ENCODE measurements at regions of chr7 and their contacts with region 1.

Region 1: GRCh38 chr7:157273208-157274093 is 63.4 kb upstream of the DNAJB6 start:
- DNase-seq: peak; percentile 63
- H3K4me3 Mint-ChIP-seq: no peak overlapping the region
- H3K27ac Mint-ChIP-seq: no peak overlapping the region
- H3K4me1 Mint-ChIP-seq: peaks cover 19% of the 10 kb centered on the region
- H3K27me3 Mint-ChIP-seq: peaks cover 20% of the 10 kb centered on the region

Region 2: GRCh38 chr7:157250605-157251228 is 22.7 kb before region 1 on chr7:
- CTCF ChIA-PET with region 1: interaction called, 12 read pairs
- DNase-seq: peak; percentile 61
- H3K4me3 Mint-ChIP-seq: no peak overlapping the region
- H3K27ac Mint-ChIP-seq: no peak overlapping the region
- H3K4me1 Mint-ChIP-seq: no peaks in the 10 kb centered on the region
- H3K27me3 Mint-ChIP-seq: no peaks in the 10 kb centered on the region

Region 3: DNA sequence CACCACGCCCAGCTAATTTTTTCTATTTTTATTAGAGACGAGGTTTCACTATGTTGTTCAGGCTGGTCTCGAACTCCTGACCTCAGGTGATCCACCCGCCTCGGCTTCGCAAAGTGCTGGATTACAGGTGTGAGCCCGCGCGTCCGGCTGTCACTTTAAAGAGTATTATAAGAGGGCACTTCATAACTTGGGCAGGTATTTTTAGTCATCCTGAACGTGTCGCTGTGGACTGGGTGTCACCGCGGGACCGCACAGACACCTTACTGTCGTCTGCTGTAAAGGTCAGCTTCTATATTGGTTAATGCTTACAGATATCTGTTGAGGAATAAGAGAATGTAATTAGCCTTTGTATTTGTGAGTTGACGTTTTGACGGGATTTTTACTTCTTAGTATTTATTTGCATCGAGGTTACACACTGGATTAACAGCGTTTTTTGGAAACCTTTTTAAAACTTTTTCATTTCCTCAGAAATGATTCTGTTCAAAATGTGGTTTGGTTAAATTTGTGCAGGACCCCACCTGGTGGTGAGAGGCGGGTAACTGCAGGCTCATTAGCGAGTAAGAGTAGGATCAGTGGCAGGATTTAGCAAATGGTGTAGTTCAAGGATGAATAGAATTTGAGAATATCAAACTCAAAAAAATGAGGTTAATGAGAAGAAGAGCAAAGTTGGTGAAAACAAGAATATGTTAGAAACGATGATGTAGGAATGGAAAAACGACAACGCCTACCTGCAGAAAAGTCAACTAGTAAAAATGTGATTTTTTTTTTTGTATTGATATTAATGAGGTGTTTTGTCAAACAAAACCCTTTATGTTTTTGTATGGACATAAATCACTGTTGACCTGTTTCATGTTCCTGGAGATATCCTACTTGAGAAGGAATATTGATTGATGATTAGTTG is 66.6 kb after region 1 on chr7:
- CTCF ChIA-PET with region 1: interaction called, 15 read pairs
- DNase-seq: peak; percentile 81
- H3K4me3 Mint-ChIP-seq: peak overlapping the region; percentile 42
- H3K27ac Mint-ChIP-seq: peak overlapping the region; percentile 78
- H3K4me1 Mint-ChIP-seq: peaks cover 56% of the 10 kb centered on the region
- H3K27me3 Mint-ChIP-seq: peaks cover 19% of the 10 kb centered on the region

Region 4: GRCh38 chr7:157366722-157367121 is 93.3 kb after region 1 on chr7:
- CTCF ChIA-PET with region 1: no interaction called
- DNase-seq: no peak
- H3K4me3 Mint-ChIP-seq: no peak overlapping the region
- H3K27ac Mint-ChIP-seq: no peak overlapping the region
- H3K4me1 Mint-ChIP-seq: peaks cover 2% of the 10 kb centered on the region
- H3K27me3 Mint-ChIP-seq: no peaks in the 10 kb centered on the region

Region 5: DNA sequence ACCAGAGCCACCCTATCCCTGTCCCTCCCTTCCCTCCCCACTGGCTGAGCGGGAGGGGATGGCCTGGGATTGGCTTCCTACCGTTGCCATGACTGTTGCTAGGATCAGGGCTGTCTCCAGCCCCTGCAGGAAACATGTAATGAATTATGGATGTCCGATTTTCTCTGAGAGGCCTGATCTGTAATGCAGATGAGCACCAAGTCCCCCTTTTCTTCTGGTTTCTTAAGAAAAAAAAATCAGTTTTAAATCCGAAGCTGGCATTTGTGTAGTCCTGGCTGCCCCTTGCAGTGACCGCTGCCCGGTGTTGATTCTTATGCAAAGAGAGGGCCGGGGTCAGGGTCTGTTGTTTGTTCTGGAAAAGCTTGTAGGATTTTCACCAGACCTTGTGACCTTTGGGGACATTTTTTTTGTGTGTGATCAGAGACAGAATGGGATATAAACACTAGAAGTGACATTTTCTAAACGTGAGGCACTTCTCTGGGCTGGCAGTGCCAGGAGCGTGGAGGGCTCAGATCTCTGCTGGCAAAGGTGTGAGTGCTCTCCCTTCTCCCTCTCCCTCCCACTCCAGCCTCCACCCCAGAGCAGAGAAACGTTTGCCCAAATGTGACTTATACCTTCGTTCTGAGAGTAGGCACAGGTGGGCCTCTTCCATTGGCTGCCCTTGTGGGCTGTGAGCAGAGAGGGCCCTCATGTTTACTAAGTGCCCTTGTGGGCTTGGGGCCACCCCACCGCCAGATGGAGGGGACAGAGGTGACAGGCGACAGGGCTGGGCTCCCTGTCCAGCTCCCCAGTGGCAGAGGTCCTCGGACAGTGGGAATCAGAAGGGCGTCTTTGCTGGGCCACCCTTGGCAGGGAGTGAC is 190.9 kb after region 1 on chr7:
- CTCF ChIA-PET with region 1: no interaction called
- DNase-seq: no peak
- H3K4me3 Mint-ChIP-seq: no peak overlapping the region
- H3K27ac Mint-ChIP-seq: peak overlapping the region; percentile 38
- H3K4me1 Mint-ChIP-seq: peaks cover 21% of the 10 kb centered on the region
- H3K27me3 Mint-ChIP-seq: peaks cover 77% of the 10 kb centered on the region

Measured in activated naive CD4-positive, alpha-beta T cell treated with anti-CD3 and anti-CD28 coated beads, Interleukin-2, amount 10 ng/mL, durations not matched to agents 7 days and 5 days (primary cell).